ENCODE measurements at regions of chr12 and their contacts with region 1.

Region 1: DNA sequence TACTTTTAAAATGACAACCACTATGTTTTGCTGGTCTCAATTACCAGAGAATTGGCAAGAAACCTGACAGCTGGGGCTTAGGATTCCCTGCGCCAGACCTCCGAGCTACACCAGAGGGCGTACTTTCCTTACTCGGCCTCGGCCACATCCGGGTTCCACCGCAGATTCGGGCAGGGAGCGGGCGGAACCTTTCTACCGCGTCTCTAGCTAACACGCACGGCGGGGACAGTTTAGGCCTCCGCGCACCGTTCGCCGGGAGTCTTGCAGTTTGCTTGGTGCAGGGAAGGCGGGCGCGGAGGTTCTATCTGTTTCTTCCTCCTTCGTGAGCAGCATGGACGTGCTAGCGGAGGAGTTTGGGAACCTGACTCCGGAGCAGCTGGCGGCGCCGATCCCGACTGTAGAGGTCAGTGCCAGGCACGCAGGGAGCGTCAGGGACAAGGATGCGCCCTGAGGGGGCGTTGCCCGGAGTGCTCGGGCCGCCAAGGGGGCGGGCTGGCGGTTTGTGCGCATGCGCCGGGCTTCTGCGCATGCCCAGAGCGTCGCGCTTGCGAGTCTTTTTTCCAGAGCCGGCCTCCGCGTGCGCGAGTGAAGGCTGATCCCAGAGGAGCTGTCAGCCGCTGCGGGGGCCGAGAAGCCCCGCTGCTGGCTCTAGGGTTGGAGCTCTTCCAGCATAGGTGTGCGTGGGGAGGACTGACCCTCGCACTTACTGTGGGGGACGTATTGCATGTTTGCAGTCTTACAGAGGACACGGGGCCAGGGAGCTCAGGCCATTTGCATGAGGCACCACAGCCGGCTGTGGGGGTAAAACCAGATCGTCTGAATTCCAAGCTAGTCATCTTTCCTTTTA is at the start of gene POLR3B:
- DNase-seq: peak; percentile 69
- H3K4me3 ChIP-seq: peak within 1 kb of the TSS; percentile 97
- CTCF ChIP-seq: peak; percentile 90

Region 2: DNA sequence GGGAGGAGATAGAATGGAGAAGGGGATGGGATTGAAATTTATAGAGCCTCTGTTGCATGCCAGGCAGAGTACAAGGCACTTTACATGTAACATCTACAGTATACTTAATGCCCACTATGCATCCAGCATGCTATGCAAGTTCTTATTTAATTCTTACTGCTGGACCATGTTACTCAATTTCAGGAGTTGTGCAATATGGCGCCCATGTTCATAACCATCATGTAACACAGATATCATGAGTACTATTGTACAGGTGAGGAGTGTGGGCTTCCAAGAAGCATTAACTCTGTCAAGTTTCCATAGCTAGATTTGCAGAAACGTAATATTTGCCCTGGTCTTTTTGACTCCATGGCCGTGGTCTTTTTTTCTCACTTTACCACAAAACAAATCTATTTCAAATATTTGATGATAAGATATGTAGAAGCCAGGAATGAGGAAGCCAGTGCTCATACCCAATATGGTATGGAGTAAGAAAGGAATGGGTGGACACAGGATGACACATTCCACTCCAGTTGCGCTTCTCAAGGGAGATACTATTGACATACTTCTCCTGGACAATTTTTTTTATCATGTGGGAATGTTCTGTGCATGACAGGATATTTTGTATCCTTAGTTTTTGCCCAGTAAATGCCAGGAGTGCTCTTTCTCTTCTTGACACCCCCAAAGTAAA is 835.5 kb before region 1 on chr12:
- CTCF ChIA-PET with region 1: no interaction called
- POLR2A ChIA-PET with region 1: no interaction called
- DNase-seq: peak; percentile 77
- H3K4me3 ChIP-seq: no peak overlapping the region
- CTCF ChIP-seq: no peak

Region 3: GRCh38 chr12:106247674-106248311 is 110.0 kb before region 1 on chr12 and contains the start of gene CKAP4:
- CTCF ChIA-PET with region 1: interaction called, 11 read pairs
- POLR2A ChIA-PET with region 1: interaction called, 13 read pairs
- DNase-seq: no peak
- H3K4me3 ChIP-seq: peak within 1 kb of the TSS; percentile 86
- CTCF ChIP-seq: no peak

Region 4: GRCh38 chr12:106369607-106370346 is 12.0 kb after region 1 on chr12:
- CTCF ChIA-PET with region 1: interaction called, 39 read pairs
- POLR2A ChIA-PET with region 1: interaction called, 5 read pairs
- DNase-seq: no peak
- H3K4me3 ChIP-seq: no peak overlapping the region
- CTCF ChIP-seq: no peak

Region 5: GRCh38 chr12:106386813-106387535 is 29.2 kb after region 1 on chr12:
- CTCF ChIA-PET with region 1: interaction called, 11 read pairs
- POLR2A ChIA-PET with region 1: no interaction called
- DNase-seq: peak; percentile 74
- H3K4me3 ChIP-seq: no peak overlapping the region
- CTCF ChIP-seq: no peak

Region 6: DNA sequence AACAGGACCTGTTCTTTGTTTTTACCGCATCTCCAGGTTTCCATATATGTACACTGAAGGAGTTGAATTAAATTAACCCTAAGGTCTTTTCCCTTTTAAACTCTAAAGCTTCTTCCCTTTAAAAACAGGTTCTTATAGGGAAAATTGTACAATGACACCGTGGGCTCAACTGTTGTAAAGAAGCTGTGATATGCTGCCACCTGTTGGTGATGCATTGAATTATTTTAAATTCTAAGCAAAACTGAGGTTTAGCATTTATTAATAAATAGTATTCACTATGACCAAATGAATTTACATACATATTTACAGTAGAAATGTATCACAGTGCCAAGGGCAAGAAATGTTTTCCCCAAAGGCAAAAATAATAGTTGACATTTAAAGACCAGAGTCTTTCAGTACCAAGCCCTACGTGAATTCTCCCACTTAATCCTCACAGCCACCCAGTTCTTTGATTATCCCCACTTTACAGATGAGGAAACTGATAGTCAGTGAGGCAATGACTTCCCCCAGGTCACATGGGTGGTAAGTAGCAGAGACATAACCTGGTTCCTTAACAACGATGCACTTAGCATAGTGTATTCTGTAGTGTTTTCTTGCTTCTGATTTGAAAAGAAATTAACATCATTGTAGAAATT is 562.3 kb after region 1 on chr12:
- CTCF ChIA-PET with region 1: interaction called, 29 read pairs
- POLR2A ChIA-PET with region 1: no interaction called
- DNase-seq: peak; percentile 14
- H3K4me3 ChIP-seq: no peak overlapping the region
- CTCF ChIP-seq: peak; percentile 43